ENCODE measurements at regions of chr10 and their contacts with region 1.

Region 1: GRCh38 chr10:33008499-33009243 is 50.6 kb upstream of the ITGB1 start:
- DNase-seq: peak in 1 of 2 donors; percentile 69
- ATAC-seq: peak in 5 of 8 donors; percentile 17 to 51 (median 44)
- H3K4me3 ChIP-seq: peak overlapping the region in 1 of 10 donors; percentile 9
- H3K27ac ChIP-seq: peak overlapping the region in 2 of 10 donors; percentile 9 to 67
- H3K4me1 ChIP-seq: peaks cover 4 to 54% (median 21%) of the 10 kb centered on the region in 9 donors
- H3K27me3 ChIP-seq: no peaks in the 10 kb centered on the region
- CTCF ChIP-seq: peak; percentile 97 to 100 (median 99)

Region 2: GRCh38 chr10:32795598-32796183 is 213.0 kb before region 1 on chr10:
- intact Hi-C with region 1: loop called (anchors 1 to 2 kb)
- DNase-seq: peak in 1 of 2 donors; percentile 13
- ATAC-seq: peak in 2 of 8 donors; percentile 58 to 67
- H3K4me3 ChIP-seq: no peak overlapping the region
- H3K27ac ChIP-seq: no peak overlapping the region
- H3K4me1 ChIP-seq: no peaks in the 10 kb centered on the region
- H3K27me3 ChIP-seq: no peaks in the 10 kb centered on the region
- CTCF ChIP-seq: peak; percentile 51 to 87 (median 74)

Region 3: GRCh38 chr10:32906595-32906994 is 102.1 kb before region 1 on chr10:
- intact Hi-C with region 1: loop called in 2 of 10 experiments (anchors 10 kb)
- DNase-seq: no peak
- ATAC-seq: no peak
- H3K4me3 ChIP-seq: no peak overlapping the region
- H3K27ac ChIP-seq: no peak overlapping the region
- H3K4me1 ChIP-seq: peaks cover 0 to 13% (median 4%) of the 10 kb centered on the region in 9 donors
- H3K27me3 ChIP-seq: no peaks in the 10 kb centered on the region
- CTCF ChIP-seq: no peak

Region 4: DNA sequence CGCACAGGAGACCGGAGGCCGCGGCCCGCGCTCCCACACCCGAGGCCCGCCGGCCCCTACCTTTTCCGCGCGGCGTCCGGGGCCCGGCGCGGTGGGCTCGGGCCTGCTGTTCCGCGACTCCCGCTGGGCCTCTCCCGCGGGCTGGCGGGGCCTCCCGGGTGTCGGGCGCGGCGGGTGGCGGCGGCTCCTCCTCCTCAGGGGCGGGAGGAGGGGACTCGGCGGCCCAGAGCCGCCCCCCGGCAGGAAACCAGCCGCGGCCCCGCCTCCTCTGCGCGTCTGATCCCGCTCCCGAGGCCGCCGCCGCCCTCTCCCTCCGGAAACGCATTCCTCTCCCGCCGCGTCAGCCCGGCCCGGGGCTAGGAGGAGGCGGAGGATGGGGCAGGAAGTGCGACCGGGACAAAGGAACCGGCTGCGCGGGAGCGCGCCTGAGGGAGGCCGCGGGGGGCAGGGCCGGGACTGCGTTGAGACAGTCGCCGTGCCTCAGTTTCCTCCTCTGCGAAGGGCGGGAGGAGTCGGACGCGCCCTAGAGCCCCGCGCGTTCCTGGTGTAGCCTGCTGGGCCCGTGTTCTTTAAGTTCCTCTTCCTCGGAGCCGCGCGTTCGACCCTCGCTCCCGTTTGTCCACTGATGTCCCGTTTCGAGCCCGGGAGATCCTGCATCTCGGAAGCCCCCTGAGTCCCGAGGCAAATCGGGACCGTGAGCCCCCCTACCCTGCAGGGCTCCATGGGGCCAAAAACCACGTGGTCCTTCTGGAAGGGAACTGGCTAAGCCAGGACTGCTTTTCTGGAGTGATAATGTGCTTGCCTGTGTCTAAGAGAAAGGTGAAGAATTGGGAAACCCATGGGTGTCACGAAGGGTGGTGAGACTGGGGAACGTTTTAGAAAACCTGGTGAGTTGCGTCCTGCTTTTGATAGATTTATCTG is 50.3 kb before region 1 on chr10 and contains the start of gene ITGB1:
- intact Hi-C with region 1: loop called in 5 of 10 experiments (anchors 2 to 5 kb)
- DNase-seq: peak; percentile 97 to 98
- ATAC-seq: peak; percentile 95 to 98 (median 96)
- H3K4me3 ChIP-seq: peak within 1 kb of the TSS; percentile 70 to 99 (median 88)
- H3K27ac ChIP-seq: peak within 1 kb of the TSS; percentile 93 to 100 (median 99)
- H3K4me1 ChIP-seq: peaks cover 0 to 83% (median 70%) of the 10 kb centered on the region in 9 donors
- H3K27me3 ChIP-seq: no peaks in the 10 kb centered on the region
- CTCF ChIP-seq: no peak
- total RNA-seq, gene ITGB1: 503 to 713 (median 595) TPM

Region 5: DNA sequence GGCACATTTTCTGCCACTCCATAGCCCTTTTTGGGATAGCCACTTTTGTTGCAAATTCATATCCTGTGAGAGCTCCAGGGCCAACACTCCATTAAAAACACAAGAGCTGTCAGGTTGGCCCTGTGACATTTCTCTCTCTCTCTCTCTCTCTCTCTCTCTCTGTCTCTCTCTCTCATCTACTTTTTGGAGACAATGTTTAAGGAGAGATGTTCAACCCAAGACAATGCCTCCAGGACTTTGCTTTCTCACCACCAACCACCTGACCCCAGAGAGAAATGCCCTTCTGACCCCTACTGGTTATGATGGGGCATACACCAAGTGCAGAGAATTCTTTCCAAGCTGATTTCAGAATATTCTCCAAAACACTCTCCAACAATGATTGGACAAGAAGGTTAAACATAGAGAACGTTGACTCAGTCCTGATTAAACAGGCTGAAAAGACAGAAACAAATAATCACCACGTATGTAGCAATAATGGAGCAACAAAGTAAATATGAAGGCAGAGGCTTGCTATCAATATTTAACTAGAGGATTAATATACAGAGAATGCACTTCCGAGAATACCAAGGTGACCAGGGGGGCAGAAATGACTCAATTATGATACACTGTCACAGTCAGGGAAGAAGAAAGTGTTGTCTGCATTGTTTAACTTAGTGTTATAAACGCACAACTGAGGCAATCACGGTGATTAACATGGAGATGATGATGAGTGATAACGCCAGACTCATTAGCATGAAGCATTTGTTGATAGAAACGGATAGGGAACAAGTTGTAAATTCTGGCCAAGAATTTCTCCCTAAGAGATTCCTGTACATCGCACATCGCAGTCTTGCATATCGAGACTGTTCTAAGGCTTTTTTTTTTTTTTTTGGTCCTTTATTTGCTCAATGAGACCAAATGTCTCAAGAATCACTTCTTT is 147.3 kb after region 1 on chr10:
- intact Hi-C with region 1: loop called in 2 of 10 experiments (anchors 5 to 10 kb)
- DNase-seq: no peak
- ATAC-seq: peak in 1 of 8 donors; percentile 42
- H3K4me3 ChIP-seq: no peak overlapping the region
- H3K27ac ChIP-seq: peak overlapping the region in 7 of 10 donors; percentile 7 to 82 (median 70)
- H3K4me1 ChIP-seq: peaks cover 2 to 47% (median 18%) of the 10 kb centered on the region in 9 donors
- H3K27me3 ChIP-seq: peaks cover 0 to 7% (median 0%) of the 10 kb centered on the region in 7 donors
- CTCF ChIP-seq: peak in 8 of 9 donors; percentile 22 to 59 (median 47)